ENCODE measurements at regions of chr1 and their contacts with region 1.

Region 1: GRCh38 chr1:171935664-171936063 is 94.4 kb downstream of the DNM3 start:
- DNase-seq: no peak
- ATAC-seq: no peak
- H3K4me3 ChIP-seq: no peak overlapping the region
- H3K27ac ChIP-seq: no peak overlapping the region
- H3K4me1 ChIP-seq: no peaks in the 10 kb centered on the region
- H3K27me3 ChIP-seq: no peaks in the 10 kb centered on the region
- CTCF ChIP-seq: no peak

Region 2: GRCh38 chr1:171883849-171884248 is 51.8 kb before region 1 on chr1:
- intact Hi-C with region 1: loop called in 1 of 2 experiments (anchors 2 kb)
- DNase-seq: no peak
- ATAC-seq: no peak
- H3K4me3 ChIP-seq: no peak overlapping the region
- H3K27ac ChIP-seq: no peak overlapping the region
- H3K4me1 ChIP-seq: no peaks in the 10 kb centered on the region
- H3K27me3 ChIP-seq: no peaks in the 10 kb centered on the region
- CTCF ChIP-seq: no peak